HepG2 (cell line): ENCODE measurements at regions of chr11 and their contacts with region 1.

Region 1: DNA sequence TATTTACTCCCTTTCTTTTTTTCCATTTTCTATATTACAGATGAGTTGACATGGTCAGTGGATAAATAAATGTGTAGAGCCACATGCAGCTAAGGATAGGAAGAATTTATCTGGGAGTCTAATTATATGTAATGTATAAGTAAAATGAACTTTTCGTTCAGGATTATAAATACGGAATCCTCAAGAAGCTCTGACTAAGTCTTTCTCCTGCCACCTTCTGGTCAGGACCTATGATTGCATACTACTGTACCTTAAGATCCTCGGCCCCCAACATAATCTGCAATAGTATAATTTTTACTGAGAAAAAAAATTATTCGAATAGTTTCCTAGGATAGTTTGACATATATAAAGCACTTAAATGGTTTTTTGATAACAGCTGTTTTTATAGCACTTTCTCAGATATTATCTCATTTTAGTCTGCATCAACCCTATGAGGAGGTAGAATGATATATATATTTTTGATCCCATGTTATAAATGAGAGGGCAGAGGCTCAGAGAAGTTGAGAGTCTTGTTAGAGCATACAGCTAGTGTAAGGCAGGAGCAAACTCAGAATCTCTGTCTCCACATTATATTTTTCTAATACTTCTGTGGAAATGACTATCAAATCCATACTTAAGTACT is 36.1 kb downstream of the CCDC90B start:
- DNase-seq: peak; percentile 24
- ATAC-seq: peak; percentile 46; the same call in 2 of the 3 replicates
- H3K4me3 ChIP-seq: no peak overlapping the region
- H3K27ac ChIP-seq: no peak overlapping the region
- H3K4me1 ChIP-seq: peaks cover 41% of the 10 kb centered on the region
- H3K27me3 ChIP-seq: no peaks in the 10 kb centered on the region
- CTCF ChIP-seq: peak; percentile 54
- EP300 ChIP-seq: no peak
- POLR2A ChIP-seq: no peak
- RAD21 ChIP-seq: no peak

Region 2: GRCh38 chr11:82906244-82906654 is 343.8 kb before region 1 on chr11:
- CTCF ChIA-PET with region 1: interaction called, 6 read pairs
- POLR2A ChIA-PET with region 1: interaction called, 4 read pairs
- in situ Hi-C with region 1: loop called (anchors 10 kb)
- intact Hi-C with region 1: loop called (anchors 1 kb)
- DNase-seq: peak; percentile 26
- ATAC-seq: no peak
- H3K4me3 ChIP-seq: no peak overlapping the region
- H3K27ac ChIP-seq: no peak overlapping the region
- H3K4me1 ChIP-seq: peaks cover 32% of the 10 kb centered on the region
- H3K27me3 ChIP-seq: no peaks in the 10 kb centered on the region
- CTCF ChIP-seq: peak; percentile 51
- EP300 ChIP-seq: no peak
- POLR2A ChIP-seq: no peak
- RAD21 ChIP-seq: peak; percentile 32; the same call in 1 of the 2 replicates

Region 3: GRCh38 chr11:83087035-83087434 is 163.0 kb before region 1 on chr11:
- CTCF ChIA-PET with region 1: no interaction called
- POLR2A ChIA-PET with region 1: no interaction called
- in situ Hi-C with region 1: no loop called
- intact Hi-C with region 1: loop called (anchors 10 kb)
- DNase-seq: peak; percentile 39
- ATAC-seq: peak; percentile 43; the same call in 2 of the 3 replicates
- H3K4me3 ChIP-seq: no peak overlapping the region
- H3K27ac ChIP-seq: no peak overlapping the region
- H3K4me1 ChIP-seq: peaks cover 20% of the 10 kb centered on the region
- H3K27me3 ChIP-seq: no peaks in the 10 kb centered on the region
- CTCF ChIP-seq: peak; percentile 31; the same call in 1 of the 2 replicates
- EP300 ChIP-seq: no peak
- POLR2A ChIP-seq: no peak
- RAD21 ChIP-seq: 0 out of 2 replicates have a peak, but pooled peaks have one; percentile 45

Region 4: GRCh38 chr11:83193315-83194280 is 56.5 kb before region 1 on chr11 and contains the start of gene ANKRD42:
- CTCF ChIA-PET with region 1: no interaction called
- POLR2A ChIA-PET with region 1: no interaction called
- in situ Hi-C with region 1: no loop called
- intact Hi-C with region 1: loop called (anchors 10 kb)
- DNase-seq: peak; percentile 93
- ATAC-seq: peak; percentile 96
- H3K4me3 ChIP-seq: peak within 1 kb of the TSS; percentile 88 to 98 (median 90)
- H3K27ac ChIP-seq: peak within 1 kb of the TSS; percentile 86
- H3K4me1 ChIP-seq: peaks cover 36% of the 10 kb centered on the region
- H3K27me3 ChIP-seq: no peaks in the 10 kb centered on the region; a peak in 1 of 5 replicates
- CTCF ChIP-seq: no peak
- EP300 ChIP-seq: 0 out of 4 replicates have a peak, but pooled peaks of 1 of the 2 experiments have one; percentile 6
- POLR2A ChIP-seq: peak; percentile 78 to 80; a peak in 3 of 4 replicates
- RAD21 ChIP-seq: no peak
- total RNA-seq, gene ANKRD42: 3.7 and 3.8 TPM in 2 replicates

Region 5: DNA sequence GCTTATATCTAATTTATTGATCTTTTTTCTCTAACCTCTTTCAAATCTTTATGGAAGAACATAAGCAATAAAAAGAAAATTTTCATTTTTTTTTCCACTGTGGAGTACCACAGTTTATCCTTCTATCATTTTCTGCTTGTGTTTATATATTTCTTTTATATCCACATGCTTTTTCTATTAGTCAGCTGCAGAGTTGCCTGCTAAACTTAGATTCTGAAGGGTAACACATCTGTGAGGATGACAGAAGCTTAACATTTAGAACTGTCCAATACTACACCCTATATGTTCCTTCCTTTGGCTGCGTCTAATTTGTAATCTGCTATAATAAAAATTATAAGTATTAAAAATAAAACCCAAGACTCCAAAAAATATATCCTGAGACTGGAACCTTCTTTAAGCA is 15.2 kb after region 1 on chr11:
- CTCF ChIA-PET with region 1: no interaction called
- POLR2A ChIA-PET with region 1: no interaction called
- in situ Hi-C with region 1: no loop called
- intact Hi-C with region 1: no loop called
- DNase-seq: no peak
- ATAC-seq: no peak
- H3K4me3 ChIP-seq: no peak overlapping the region
- H3K27ac ChIP-seq: no peak overlapping the region
- H3K4me1 ChIP-seq: no peaks in the 10 kb centered on the region
- H3K27me3 ChIP-seq: no peaks in the 10 kb centered on the region
- CTCF ChIP-seq: no peak
- EP300 ChIP-seq: no peak
- POLR2A ChIP-seq: no peak
- RAD21 ChIP-seq: no peak

Region 6: GRCh38 chr11:83285771-83286528 is 35.9 kb after region 1 on chr11 and contains the start of gene CCDC90B:
- CTCF ChIA-PET with region 1: no interaction called
- POLR2A ChIA-PET with region 1: interaction called, 12 read pairs
- in situ Hi-C with region 1: no loop called
- intact Hi-C with region 1: no loop called
- DNase-seq: peak; percentile 95
- ATAC-seq: peak; percentile 94
- H3K4me3 ChIP-seq: peak within 1 kb of the TSS; percentile 68 to 91 (median 75)
- H3K27ac ChIP-seq: peak within 1 kb of the TSS; percentile 96
- H3K4me1 ChIP-seq: peaks cover 34% of the 10 kb centered on the region
- H3K27me3 ChIP-seq: no peaks in the 10 kb centered on the region
- CTCF ChIP-seq: peak; percentile 81
- EP300 ChIP-seq: peak in 1 of 2 experiments; percentile 15; a peak in 1 of 4 replicates
- POLR2A ChIP-seq: peak; percentile 75 to 98
- RAD21 ChIP-seq: no peak; the same call in 1 of the 2 replicates
- total RNA-seq, gene CCDC90B: 46.1 and 56.3 TPM in 2 replicates